ENCODE measurements at regions of chr13 and their contacts with region 1.

Region 1: DNA sequence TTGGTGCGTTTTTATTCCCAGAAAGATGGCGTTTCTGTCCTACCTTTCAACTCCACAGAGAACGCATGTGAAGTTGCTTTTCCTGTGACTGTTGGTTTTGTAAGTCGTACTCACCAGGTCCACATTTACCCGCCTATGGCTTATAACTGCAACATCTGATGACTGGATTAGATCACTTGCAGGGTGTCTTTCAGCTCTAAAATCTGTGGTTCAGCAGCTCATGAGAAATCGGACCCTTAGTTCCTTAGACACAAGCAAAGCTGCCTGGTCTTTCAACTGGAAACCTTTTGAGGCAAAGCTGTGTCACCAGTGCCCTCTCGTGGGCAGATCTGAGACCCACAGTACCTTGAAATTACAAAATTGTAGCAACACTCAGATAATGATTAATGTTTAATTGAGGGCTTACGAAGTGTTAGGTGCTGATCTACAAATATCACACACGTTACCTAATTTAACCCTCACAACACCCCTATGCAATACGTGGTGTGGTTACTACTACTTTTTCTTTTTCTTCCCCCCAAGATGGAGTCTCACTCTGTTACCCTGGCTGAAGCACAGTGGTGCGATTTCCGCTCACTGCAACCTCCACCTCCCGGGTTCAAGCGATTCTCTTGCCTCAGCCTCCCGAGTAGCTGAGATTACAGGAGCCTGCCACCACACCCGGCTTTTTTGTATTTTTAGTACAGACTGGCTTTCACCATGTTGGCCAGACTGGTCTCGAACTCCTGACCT is 65.4 kb downstream of the RUBCNL start:
- DNase-seq: peak; percentile 65 to 72 (median 68)
- H3K4me3 ChIP-seq: no peak overlapping the region
- H3K4me3 Mint-ChIP-seq: peak overlapping the region; percentile 70 to 87 (median 74)
- H3K27ac ChIP-seq: peak overlapping the region; percentile 18
- H3K27ac Mint-ChIP-seq: peak overlapping the region; percentile 67 to 93 (median 90)
- H3K4me1 ChIP-seq: peaks cover 15% of the 10 kb centered on the region
- H3K4me1 Mint-ChIP-seq: peaks cover 7 to 26% (median 13%) of the 10 kb centered on the region in 4 donors
- H3K27me3 ChIP-seq: no peaks in the 10 kb centered on the region
- H3K27me3 Mint-ChIP-seq: peaks cover 0 to 4% of the 10 kb centered on the region in 2 donors

Region 2: DNA sequence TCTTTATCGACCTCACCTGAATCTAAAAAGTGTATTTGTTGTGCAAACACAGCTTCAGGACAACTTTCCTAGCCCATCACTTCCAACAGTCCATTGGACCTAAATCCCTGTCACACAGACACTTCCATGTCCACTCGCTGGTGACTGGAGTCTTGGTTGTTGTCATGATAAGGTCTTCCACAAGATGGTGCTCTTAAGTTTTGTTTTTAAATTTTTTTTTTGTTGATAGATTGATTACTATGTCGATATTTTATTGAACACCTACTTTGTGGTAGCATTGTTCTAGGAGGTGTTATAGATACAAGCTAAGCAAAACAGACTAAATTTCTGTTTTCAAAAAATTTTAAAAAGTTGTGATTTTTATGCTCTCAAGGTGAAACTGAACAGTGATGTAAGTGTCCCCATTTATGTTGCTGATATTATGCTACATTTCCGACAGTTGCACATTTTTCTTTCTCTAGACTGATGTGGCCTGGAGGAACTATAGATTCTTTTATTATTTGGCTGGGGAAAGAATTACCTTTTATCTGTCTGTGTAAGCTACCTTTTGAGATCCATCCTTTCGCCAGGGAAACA is 698.1 kb before region 1 on chr13:
- CTCF ChIA-PET with region 1: interaction called, 16 read pairs
- POLR2A ChIA-PET with region 1: no interaction called
- intact Hi-C with region 1: no loop called
- DNase-seq: peak in 4 of 5 donors; percentile 11 to 31 (median 22)
- H3K4me3 ChIP-seq: no peak overlapping the region
- H3K4me3 Mint-ChIP-seq: no peak overlapping the region
- H3K27ac ChIP-seq: no peak overlapping the region
- H3K27ac Mint-ChIP-seq: no peak overlapping the region
- H3K4me1 ChIP-seq: peaks cover 5% of the 10 kb centered on the region
- H3K4me1 Mint-ChIP-seq: peaks cover 0 to 1% (median under 1%) of the 10 kb centered on the region in 4 donors
- H3K27me3 ChIP-seq: peaks cover 6% of the 10 kb centered on the region
- H3K27me3 Mint-ChIP-seq: peaks cover 24 to 39% of the 10 kb centered on the region in 2 donors

Region 3: DNA sequence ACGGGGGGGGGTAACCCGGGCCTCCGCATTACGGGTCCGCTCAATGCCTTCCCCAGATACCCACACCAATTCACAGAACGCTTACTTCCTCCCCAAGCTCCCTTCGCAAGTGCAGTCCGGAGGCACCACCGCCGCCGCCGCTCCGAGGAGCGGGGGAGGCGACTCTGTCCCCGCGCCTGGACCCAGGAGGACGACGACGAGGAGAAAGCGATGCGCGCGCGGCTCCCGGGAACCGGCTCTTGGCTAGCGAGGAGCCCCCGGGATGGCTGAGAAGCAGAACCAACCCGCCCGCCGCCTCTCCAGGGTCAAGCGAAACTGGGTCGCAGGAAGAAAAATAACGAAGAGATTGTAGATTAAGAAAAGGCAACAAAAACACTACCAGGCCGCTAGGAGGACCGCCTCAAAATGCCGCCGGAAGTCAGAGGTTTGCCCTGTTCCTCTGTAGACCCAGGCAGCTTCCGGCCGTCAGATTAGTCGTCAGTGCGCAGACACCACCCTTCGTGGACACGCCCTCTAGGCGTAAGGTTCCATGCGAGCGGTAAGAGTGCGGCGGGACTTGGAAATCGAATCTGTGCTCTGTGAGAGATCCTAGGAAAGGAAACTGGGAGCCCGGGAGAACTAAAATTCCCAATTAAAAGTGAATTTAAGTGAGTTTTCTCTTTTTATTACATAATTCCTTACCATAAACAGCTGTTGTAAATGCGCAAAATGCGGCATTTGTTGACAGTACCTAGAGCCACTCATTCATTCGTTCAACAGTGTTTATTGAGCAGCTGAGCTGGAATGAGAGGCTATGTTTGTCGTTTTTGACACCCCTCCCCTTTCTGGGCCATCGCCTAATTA is 269.1 kb before region 1 on chr13 and contains the start of gene ZC3H13:
- CTCF ChIA-PET with region 1: interaction called, 7 read pairs
- POLR2A ChIA-PET with region 1: interaction called, 3 read pairs
- intact Hi-C with region 1: loop called (anchors 2 kb)
- DNase-seq: peak; percentile 91 to 97 (median 93)
- H3K4me3 ChIP-seq: peak within 1 kb of the TSS; percentile 59 to 88
- H3K4me3 Mint-ChIP-seq: peak within 1 kb of the TSS; percentile 88 to 99 (median 95)
- H3K27ac ChIP-seq: peak within 1 kb of the TSS; percentile 95
- H3K27ac Mint-ChIP-seq: peak within 1 kb of the TSS; percentile 93 to 99 (median 98)
- H3K4me1 ChIP-seq: peaks cover 38% of the 10 kb centered on the region
- H3K4me1 Mint-ChIP-seq: peaks cover 28 to 49% (median 37%) of the 10 kb centered on the region in 4 donors
- H3K27me3 ChIP-seq: peaks cover 4% of the 10 kb centered on the region
- H3K27me3 Mint-ChIP-seq: peaks cover 7 to 14% of the 10 kb centered on the region in 2 donors
- total RNA-seq, gene ZC3H13: 55.1 to 65.5 TPM

Region 4: GRCh38 chr13:46146899-46147298 is 174.8 kb before region 1 on chr13:
- CTCF ChIA-PET with region 1: interaction called, 15 read pairs
- POLR2A ChIA-PET with region 1: no interaction called
- intact Hi-C with region 1: loop called (anchors 5 kb)
- DNase-seq: no peak
- H3K4me3 ChIP-seq: no peak overlapping the region
- H3K4me3 Mint-ChIP-seq: no peak overlapping the region
- H3K27ac ChIP-seq: no peak overlapping the region
- H3K27ac Mint-ChIP-seq: peak overlapping the region in 4 of 7 donors; percentile 42 to 64 (median 53)
- H3K4me1 ChIP-seq: peaks cover 7% of the 10 kb centered on the region
- H3K4me1 Mint-ChIP-seq: peaks cover 22 to 36% (median 27%) of the 10 kb centered on the region in 4 donors
- H3K27me3 ChIP-seq: no peaks in the 10 kb centered on the region
- H3K27me3 Mint-ChIP-seq: no peaks in the 10 kb centered on the region

Region 5: DNA sequence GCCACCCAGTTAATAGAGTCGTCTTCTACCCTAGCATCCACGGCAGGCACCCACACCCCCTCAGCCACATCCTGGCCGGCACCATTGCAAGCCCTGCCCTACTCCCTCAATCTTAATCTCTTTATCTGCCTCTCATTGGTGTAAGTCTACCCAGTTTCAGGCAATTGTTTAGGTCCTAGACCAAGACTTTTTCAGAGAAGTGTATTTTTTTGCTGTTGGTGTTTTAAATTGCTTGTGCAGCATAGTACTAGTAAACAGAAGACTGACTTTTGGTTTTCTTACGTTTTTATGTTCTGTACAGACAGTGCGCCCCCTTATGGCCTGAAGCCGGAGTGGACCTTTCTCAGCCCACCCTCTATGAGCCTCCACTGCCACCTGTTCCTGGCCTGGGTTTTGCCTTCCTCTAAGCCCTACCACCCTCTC is 137.4 kb before region 1 on chr13:
- CTCF ChIA-PET with region 1: interaction called, 5 read pairs
- POLR2A ChIA-PET with region 1: no interaction called
- intact Hi-C with region 1: loop called (anchors 1 kb)
- DNase-seq: peak; percentile 77 to 81 (median 80)
- H3K4me3 ChIP-seq: peak overlapping the region in 1 of 2 donors; percentile 21
- H3K4me3 Mint-ChIP-seq: peak overlapping the region; percentile 67 to 98 (median 98)
- H3K27ac ChIP-seq: peak overlapping the region; percentile 89
- H3K27ac Mint-ChIP-seq: peak overlapping the region; percentile 90 to 99 (median 96)
- H3K4me1 ChIP-seq: peaks cover 36% of the 10 kb centered on the region
- H3K4me1 Mint-ChIP-seq: peaks cover 34 to 50% (median 39%) of the 10 kb centered on the region in 4 donors
- H3K27me3 ChIP-seq: no peaks in the 10 kb centered on the region
- H3K27me3 Mint-ChIP-seq: no peaks in the 10 kb centered on the region

Region 6: DNA sequence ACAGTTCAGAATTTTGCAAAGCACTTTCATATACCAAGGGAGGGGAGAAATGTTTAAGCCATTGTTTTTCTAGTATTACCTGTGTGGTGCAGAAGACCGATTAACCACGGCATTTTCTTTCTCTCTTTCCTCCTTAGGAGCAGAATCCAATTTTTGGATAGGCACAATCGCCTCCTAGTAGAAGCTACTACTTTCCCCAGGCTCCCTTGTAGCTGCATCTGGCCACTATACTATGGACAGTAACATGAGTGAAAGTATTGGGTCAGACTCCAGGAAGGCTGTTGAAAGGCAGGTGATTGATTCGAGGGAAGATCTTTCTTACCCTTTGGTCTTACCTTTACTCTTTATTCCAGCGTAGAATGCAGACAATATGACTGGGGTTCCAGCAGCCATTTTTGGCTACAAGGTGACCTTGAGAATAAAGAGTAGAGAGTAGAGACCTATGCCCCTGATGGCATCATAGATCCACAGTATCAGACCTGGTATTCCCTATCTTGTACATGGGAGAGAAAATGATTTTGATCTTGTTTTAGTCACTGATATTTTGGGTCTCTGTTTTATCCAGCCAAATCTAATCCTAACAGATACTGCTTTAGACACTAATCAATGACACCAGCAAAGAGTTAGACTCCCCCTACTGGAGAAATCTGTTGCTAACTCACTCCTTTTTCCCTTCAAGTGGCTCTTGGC is 32.9 kb before region 1 on chr13:
- CTCF ChIA-PET with region 1: interaction called, 166 read pairs
- POLR2A ChIA-PET with region 1: interaction called, 3 read pairs
- intact Hi-C with region 1: loop called (anchors 1 kb)
- DNase-seq: peak in 4 of 5 donors; percentile 67 to 71 (median 69)
- H3K4me3 ChIP-seq: no peak overlapping the region
- H3K4me3 Mint-ChIP-seq: no peak overlapping the region
- H3K27ac ChIP-seq: no peak overlapping the region
- H3K27ac Mint-ChIP-seq: peak overlapping the region in 3 of 7 donors; percentile 26 to 53 (median 42)
- H3K4me1 ChIP-seq: peaks cover 7% of the 10 kb centered on the region
- H3K4me1 Mint-ChIP-seq: peaks cover 3 to 22% (median 8%) of the 10 kb centered on the region in 4 donors
- H3K27me3 ChIP-seq: no peaks in the 10 kb centered on the region
- H3K27me3 Mint-ChIP-seq: no peaks in the 10 kb centered on the region

Region 7: DNA sequence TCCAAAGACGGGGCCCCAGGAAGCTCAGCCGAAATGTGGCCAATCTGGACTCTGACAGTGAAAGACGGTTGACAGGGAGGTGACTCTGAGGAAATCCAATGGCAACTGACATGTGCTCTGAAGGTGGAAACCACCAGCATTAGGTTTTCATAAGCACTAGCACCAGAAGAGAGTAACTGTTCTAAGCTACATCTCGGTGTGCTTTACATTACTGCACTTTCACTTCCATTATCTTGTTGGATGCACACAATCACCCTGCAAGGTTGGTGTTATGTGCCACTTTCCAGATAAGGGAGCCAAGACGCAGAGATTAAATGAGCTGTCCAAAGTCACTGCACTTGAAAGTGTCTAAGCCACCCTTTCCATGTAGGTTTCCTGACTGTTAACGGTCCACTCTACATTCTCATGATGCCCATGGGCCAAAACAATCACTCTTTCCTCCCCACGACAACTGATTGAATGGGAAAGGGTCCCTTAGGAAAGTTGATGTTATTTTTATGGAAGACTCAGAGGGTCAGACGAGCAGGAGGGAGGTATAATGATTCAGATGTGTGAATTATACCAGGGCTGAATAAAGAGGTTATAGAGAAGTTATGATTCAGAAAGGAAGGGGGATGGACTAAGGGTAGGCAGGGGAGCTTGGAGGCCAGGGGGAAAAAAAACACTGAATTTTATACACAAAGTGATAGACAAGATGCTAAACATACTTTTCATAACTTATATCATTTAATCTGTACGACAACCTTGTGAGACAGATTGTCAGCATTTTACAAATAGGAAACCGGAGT is 12.6 kb after region 1 on chr13:
- CTCF ChIA-PET with region 1: interaction called, 10 read pairs
- POLR2A ChIA-PET with region 1: no interaction called
- intact Hi-C with region 1: no loop called
- DNase-seq: no peak
- H3K4me3 ChIP-seq: no peak overlapping the region
- H3K4me3 Mint-ChIP-seq: no peak overlapping the region
- H3K27ac ChIP-seq: no peak overlapping the region
- H3K27ac Mint-ChIP-seq: no peak overlapping the region
- H3K4me1 ChIP-seq: no peaks in the 10 kb centered on the region
- H3K4me1 Mint-ChIP-seq: peaks cover 0 to 7% (median 2%) of the 10 kb centered on the region in 4 donors
- H3K27me3 ChIP-seq: no peaks in the 10 kb centered on the region
- H3K27me3 Mint-ChIP-seq: peaks cover 1 to 2% of the 10 kb centered on the region in 2 donors

Region 8: DNA sequence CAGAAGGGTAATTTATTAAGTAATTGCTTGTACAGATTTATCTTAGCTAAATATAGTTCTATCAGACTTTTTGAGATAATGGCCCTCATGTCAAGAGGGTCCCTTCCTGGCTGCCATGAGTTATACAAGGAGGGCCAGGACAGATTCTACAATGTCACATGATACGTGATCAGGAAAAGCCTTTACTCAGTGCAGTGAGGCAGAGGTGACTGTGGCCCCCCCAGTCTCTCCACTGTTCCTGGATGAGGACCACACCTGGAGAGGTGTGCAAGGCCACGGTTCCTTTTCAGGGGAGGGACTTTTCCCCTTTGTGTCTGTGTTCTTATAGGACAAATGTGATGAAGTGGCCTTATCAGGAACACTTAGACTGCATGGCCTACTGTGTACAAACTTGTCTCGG is 177.0 kb after region 1 on chr13:
- CTCF ChIA-PET with region 1: no interaction called
- POLR2A ChIA-PET with region 1: no interaction called
- intact Hi-C with region 1: no loop called
- DNase-seq: no peak
- H3K4me3 ChIP-seq: no peak overlapping the region
- H3K4me3 Mint-ChIP-seq: no peak overlapping the region
- H3K27ac ChIP-seq: no peak overlapping the region
- H3K27ac Mint-ChIP-seq: no peak overlapping the region
- H3K4me1 ChIP-seq: no peaks in the 10 kb centered on the region
- H3K4me1 Mint-ChIP-seq: no peaks in the 10 kb centered on the region
- H3K27me3 ChIP-seq: no peaks in the 10 kb centered on the region
- H3K27me3 Mint-ChIP-seq: peaks cover 2 to 8% of the 10 kb centered on the region in 2 donors

Measured in CD4-positive, alpha-beta memory T cell (primary cell).